Endothelial cell of umbilical vein (primary cell): ENCODE measurements at regions of chr13 and their contacts with region 1.

Region 1: DNA sequence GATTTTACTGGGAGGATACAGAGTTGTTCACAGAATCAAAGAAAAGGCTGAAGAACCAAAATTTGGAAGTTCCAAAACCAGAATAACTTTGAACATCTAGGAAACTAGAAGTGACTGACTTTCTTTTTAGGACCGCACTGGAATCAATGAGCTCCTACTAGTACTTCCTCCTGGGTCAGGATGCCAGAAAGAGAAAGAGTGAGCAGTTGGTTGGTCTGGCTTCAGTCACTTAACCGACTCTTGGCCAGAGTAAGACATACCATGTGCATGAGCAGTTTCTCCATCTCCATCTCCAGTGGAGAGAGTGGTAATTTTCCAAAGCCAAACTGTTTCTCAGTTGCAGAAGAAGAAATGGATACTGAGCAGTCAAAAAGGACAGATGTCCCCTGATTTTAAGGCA is 27.1 kb upstream of the MTUS2 start:
- DNase-seq: no peak
- H3K4me3 ChIP-seq: no peak overlapping the region
- H3K27ac ChIP-seq: no peak overlapping the region
- H3K4me1 ChIP-seq: peaks cover 4% of the 10 kb centered on the region
- H3K27me3 ChIP-seq: peaks cover 28 to 31% of the 10 kb centered on the region in 2 experiments
- CTCF ChIP-seq: no peak
- POLR2A ChIP-seq: no peak

Region 2: GRCh38 chr13:28058866-28059624 is 733.9 kb before region 1 on chr13:
- CTCF ChIA-PET with region 1: interaction called, 30 read pairs
- POLR2A ChIA-PET with region 1: no interaction called
- dilution Hi-C with region 1: no loop called
- intact Hi-C with region 1: loop called (anchors 5 kb)
- DNase-seq: peak; percentile 46
- H3K4me3 ChIP-seq: no peak overlapping the region
- H3K27ac ChIP-seq: no peak overlapping the region
- H3K4me1 ChIP-seq: no peaks in the 10 kb centered on the region
- H3K27me3 ChIP-seq: peaks cover 7 to 9% of the 10 kb centered on the region in 2 experiments
- CTCF ChIP-seq: peak; percentile 40 to 44
- POLR2A ChIP-seq: no peak

Region 3: DNA sequence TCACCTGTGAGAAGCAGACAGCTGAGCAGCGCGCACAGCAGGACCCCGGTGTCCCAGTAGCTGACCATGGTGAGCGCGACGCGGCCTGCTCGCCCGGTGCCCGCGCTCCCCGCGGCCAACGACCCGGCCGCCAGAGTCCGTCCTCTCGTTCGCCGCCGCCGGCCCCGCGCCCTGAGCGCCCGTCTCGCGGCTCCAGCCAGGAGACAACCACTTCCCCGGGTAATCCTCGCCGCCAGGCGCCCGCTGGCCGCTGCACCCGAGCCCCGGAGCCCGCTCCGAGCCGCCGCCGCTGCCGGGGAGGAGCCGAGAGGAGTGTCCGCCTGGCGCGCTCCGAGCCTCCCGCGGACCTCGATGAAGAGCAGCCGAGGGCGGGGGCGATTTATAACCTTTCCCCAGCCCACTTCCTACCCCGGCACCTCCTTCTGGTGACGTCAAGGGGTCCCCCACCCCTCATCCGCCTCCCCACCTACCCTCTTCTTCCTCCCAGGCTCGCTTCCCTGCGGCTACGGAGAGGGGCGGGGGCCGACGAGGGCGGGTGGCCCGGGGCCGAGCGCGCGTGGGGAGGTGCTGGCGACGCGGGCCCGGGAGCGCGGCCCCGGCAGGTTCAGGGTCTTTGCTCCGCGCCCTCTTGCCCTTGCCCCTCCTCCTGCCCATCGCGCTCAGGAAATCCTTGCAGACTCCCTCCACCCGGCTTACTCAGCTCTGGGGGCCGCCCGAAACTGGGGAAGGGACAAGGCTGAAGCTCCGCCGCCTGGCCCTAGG is 298.0 kb before region 1 on chr13 and contains the start of gene FLT1:
- CTCF ChIA-PET with region 1: interaction called, 4 read pairs
- POLR2A ChIA-PET with region 1: no interaction called
- dilution Hi-C with region 1: no loop called
- intact Hi-C with region 1: loop called (anchors 2 kb)
- DNase-seq: peak; percentile 74
- H3K4me3 ChIP-seq: peak within 1 kb of the TSS; percentile 95 to 98 (median 96)
- H3K27ac ChIP-seq: peak within 1 kb of the TSS; percentile 85
- H3K4me1 ChIP-seq: peaks cover 44% of the 10 kb centered on the region
- H3K27me3 ChIP-seq: no peaks in the 10 kb centered on the region
- CTCF ChIP-seq: no peak
- POLR2A ChIP-seq: peak; percentile 90
- total RNA-seq, gene FLT1: 104 and 178 TPM in 2 replicates

Region 4: DNA sequence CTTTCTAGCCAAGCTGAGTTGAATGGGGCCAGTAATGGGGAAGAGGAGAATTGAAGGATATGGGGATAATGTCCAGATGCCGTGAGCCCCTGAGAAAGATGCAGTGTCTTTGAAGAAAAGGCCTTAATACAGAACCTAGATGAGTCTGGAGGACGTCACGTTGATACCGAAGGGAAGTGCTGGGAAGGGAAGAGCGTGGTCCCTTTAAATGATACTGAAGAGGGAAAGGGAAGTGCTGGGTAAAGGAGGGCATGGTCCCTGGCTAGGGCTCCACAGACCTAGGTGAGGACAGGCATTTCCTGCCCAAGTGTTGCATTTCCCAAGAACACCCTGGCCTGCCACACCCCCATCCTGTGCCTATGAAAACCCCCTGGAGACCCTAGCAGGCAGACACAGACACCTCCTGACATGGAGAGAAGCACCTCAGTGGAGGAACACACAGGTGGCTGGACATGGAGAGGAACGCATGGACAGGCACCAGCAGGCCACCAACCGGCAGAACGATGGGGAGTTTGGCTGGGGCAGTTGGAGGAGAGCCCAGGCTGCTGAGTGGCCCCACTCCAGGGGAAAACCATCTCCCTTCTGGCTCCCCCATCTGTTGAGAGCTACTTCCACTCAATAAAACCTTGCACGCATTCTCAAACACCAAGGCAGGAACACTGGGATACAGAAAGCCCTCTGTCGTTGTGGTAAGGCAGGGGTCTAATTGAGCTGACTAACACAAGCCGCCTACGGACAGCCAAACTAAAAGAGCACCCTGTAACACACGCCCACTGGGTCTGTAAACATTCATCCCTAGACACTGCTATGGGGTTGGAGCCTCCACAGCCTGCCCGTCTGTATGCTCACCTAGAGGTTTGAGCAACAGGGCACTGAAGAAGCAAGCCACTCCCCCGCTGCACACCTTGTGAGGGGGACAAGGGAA is 168.9 kb before region 1 on chr13:
- CTCF ChIA-PET with region 1: no interaction called
- POLR2A ChIA-PET with region 1: no interaction called
- dilution Hi-C with region 1: no loop called
- intact Hi-C with region 1: no loop called
- DNase-seq: no peak
- H3K4me3 ChIP-seq: no peak overlapping the region
- H3K27ac ChIP-seq: no peak overlapping the region
- H3K4me1 ChIP-seq: no peaks in the 10 kb centered on the region
- H3K27me3 ChIP-seq: no peaks in the 10 kb centered on the region
- CTCF ChIP-seq: no peak
- POLR2A ChIP-seq: no peak

Region 5: GRCh38 chr13:28718543-28719226 is 74.3 kb before region 1 on chr13 and contains the start of gene SLC46A3:
- CTCF ChIA-PET with region 1: interaction called, 28 read pairs
- POLR2A ChIA-PET with region 1: interaction called, 4 read pairs
- dilution Hi-C with region 1: no loop called
- intact Hi-C with region 1: loop called (anchors 1 kb)
- DNase-seq: peak; percentile 99
- H3K4me3 ChIP-seq: peak within 1 kb of the TSS; percentile 43 to 61 (median 48)
- H3K27ac ChIP-seq: peak within 1 kb of the TSS; percentile 6
- H3K4me1 ChIP-seq: peaks cover 30% of the 10 kb centered on the region
- H3K27me3 ChIP-seq: no peaks in the 10 kb centered on the region
- CTCF ChIP-seq: peak in 1 of 2 donors; percentile 15
- POLR2A ChIP-seq: no peak
- total RNA-seq, gene SLC46A3: 2.1 and 3.9 TPM in 2 replicates

Region 6: GRCh38 chr13:28778308-28779215 is 14.4 kb before region 1 on chr13:
- CTCF ChIA-PET with region 1: interaction called, 10 read pairs
- POLR2A ChIA-PET with region 1: no interaction called
- dilution Hi-C with region 1: no loop called
- intact Hi-C with region 1: no loop called
- DNase-seq: no peak
- H3K4me3 ChIP-seq: no peak overlapping the region
- H3K27ac ChIP-seq: no peak overlapping the region
- H3K4me1 ChIP-seq: no peaks in the 10 kb centered on the region
- H3K27me3 ChIP-seq: peaks cover 0 to 2% of the 10 kb centered on the region in 2 experiments
- CTCF ChIP-seq: no peak
- POLR2A ChIP-seq: no peak